Mammary epithelial cell (primary cell): ENCODE measurements at regions of chr2 and their contacts with region 1.

Region 1: DNA sequence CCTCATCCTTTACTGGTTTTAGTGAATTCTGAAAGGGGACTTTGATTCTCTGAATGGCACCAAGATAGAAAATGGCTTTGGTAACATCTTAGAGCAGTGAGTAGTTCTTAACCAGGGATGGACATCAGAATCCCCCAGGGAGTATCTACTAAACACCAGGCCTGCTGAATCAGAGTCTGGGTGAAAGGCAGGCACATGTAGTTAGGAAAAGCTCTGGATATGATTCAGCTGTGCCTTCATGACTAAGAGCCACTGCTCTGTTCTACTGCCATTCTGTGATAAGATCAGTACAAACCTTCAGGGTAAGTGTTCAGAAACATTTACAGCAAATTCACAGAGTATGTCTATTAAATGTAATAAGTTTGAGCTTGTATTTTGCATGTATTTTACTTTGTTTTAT is 46.2 kb upstream of the B3GNT2 start:
- DNase-seq: peak; percentile 96
- H3K4me3 ChIP-seq: no peak overlapping the region
- H3K27ac ChIP-seq: peak overlapping the region; percentile 61
- H3K4me1 ChIP-seq: peaks cover 34% of the 10 kb centered on the region
- H3K27me3 ChIP-seq: no peaks in the 10 kb centered on the region
- CTCF ChIP-seq: no peak

Region 2: DNA sequence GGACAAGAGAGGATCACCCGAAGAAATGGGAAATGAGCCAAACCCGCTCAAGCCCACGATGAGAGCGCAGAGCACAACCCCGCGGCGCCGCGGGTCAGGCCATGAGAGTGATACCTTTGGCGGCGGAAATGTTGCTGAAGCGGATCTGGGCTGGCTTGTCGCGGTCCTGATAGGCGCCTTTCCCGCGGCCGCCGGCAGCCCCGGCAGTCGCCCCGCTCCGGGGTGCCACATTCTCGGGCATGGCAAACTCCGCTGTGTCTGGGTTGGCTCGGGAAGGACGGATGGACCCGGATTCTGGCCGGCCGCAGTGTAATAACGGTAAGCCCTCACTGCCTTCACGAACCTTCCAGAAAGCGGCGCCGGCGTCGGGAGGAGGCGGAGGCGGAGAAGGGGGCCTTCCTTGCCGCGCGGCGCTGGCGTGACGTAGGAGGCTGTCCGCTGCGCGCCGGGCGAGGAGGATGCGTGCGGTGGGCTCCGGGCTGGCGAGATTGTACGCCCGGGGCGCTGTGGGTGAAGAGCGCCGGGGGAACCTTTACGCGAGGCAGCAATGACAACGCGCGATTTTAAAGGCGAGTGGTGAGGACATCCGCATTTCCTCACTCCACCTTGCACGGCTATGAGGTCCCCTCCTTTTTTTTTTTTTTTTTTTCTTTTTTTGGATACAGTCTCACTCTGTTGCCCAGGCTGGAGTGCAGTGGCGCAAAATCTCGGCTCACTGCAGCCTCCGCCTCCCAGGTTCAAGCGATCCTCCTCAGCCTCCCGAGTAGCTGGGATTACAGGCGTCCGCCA is 261.2 kb before region 1 on chr2 and contains the start of gene CCT4:
- CTCF ChIA-PET with region 1: no interaction called
- dilution Hi-C with region 1: no loop called
- in situ Hi-C with region 1: no loop called
- intact Hi-C with region 1: no loop called
- DNase-seq: peak; percentile 80
- H3K4me3 ChIP-seq: peak within 1 kb of the TSS; percentile 83 to 97 (median 94)
- H3K27ac ChIP-seq: peak within 1 kb of the TSS; percentile 96
- H3K4me1 ChIP-seq: peaks cover 17% of the 10 kb centered on the region
- H3K27me3 ChIP-seq: no peaks in the 10 kb centered on the region
- CTCF ChIP-seq: no peak
- total RNA-seq, gene CCT4: 117 to 205 TPM

Region 3: GRCh38 chr2:62038975-62039771 is 110.5 kb before region 1 on chr2:
- CTCF ChIA-PET with region 1: no interaction called
- dilution Hi-C with region 1: no loop called
- in situ Hi-C with region 1: no loop called
- intact Hi-C with region 1: loop called (anchors 5 kb)
- DNase-seq: peak; percentile 93
- H3K4me3 ChIP-seq: no peak overlapping the region
- H3K27ac ChIP-seq: peak overlapping the region; percentile 53
- H3K4me1 ChIP-seq: peaks cover 31% of the 10 kb centered on the region
- H3K27me3 ChIP-seq: no peaks in the 10 kb centered on the region
- CTCF ChIP-seq: no peak

Region 4: DNA sequence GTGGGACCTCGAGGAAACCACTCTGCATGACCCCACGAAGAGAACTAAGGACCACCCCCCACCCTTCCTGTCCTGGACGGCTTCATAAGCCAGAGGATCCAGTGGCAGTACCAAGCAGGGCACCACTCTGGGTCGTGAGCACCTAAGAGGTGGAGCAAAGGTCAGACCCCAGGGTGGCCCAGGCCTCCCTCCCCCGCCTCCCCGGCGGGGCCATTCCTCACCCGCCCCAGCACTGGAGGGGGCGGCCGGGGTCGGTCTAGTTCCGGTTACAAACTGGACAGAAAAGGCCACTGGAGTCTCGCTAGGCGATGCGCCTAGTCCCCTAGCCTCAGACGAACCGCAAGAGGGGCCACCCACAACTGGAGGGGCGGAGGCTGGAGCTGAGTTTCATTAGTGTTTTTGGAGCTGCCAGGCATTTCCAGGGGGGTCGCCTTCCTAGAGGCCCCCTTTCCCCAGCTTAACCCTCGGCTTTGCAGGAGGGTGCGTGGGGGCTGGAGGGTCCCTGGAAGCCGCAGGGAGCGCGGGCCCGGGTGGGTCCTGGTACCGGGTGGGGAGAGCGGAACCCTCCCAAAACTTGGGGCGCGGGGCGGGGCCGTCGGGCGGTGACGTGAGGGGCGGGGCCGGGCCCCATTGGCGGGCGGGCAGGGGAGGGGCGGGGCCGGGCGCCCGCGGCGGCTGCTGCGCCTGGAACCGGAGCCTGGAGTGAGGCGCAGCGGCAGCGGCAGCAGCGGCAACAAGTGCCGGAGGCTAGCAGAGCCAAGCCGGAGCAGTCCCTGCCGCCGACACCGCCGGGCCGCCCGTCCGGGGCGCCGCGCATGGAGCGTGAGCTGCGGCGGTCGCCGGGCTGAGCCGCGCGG is 45.9 kb after region 1 on chr2 and contains the start of gene B3GNT2:
- CTCF ChIA-PET with region 1: no interaction called
- dilution Hi-C with region 1: no loop called
- in situ Hi-C with region 1: no loop called
- intact Hi-C with region 1: loop called (anchors 2 kb)
- DNase-seq: peak; percentile 66
- H3K4me3 ChIP-seq: peak within 1 kb of the TSS; percentile 73 to 95 (median 76)
- H3K27ac ChIP-seq: peak within 1 kb of the TSS; percentile 68
- H3K4me1 ChIP-seq: peaks cover 10% of the 10 kb centered on the region
- H3K27me3 ChIP-seq: no peaks in the 10 kb centered on the region
- CTCF ChIP-seq: no peak
- total RNA-seq, gene B3GNT2: 35.2 to 44.8 TPM